Posterior vena cava (tissue), 2 donors: ENCODE measurements at regions of chrX and their contacts with region 1.

Region 1: GRCh38 chrX:130916636-130917422 is 13.8 kb upstream of the ENOX2 start:
- DNase-seq: no peak

Region 2: GRCh38 chrX:130393451-130394074 is 523.3 kb before region 1 on chrX:
- intact Hi-C with region 1: loop called in 1 of 2 experiments (anchors 10 kb)
- DNase-seq: peak; percentile 77

Region 3: DNA sequence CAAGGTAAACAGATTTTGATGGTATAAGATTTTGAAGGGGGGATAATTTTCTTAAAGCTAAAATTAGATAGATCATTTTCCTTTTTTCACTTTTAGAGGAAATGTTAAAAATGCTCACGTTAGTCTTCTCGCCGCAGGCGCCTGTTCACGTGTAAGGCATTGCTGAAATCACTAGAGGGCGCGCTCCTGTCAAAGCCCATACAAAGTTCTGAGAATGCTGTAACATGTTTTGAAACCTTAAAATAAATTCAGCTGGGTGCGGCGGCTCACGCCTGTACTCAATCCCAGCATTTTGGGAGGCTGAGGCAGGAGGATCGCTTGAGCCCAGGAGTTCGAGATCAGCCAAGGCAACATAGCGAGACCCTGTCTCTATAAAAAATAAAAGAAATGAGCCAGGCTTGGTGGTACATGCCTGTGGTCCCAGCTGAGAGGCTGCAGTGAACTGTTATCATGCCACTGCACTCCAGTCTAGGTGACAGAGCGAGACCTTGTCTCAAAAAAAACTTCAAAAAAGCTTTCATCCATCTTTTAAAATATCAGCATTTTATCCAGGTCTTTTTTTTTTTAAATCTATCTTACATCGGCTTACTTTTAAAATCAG is 377.0 kb before region 1 on chrX:
- intact Hi-C with region 1: loop called in 1 of 2 experiments (anchors 10 kb)
- DNase-seq: peak; percentile 85

Region 4: GRCh38 chrX:131046596-131046995 is 129.8 kb after region 1 on chrX:
- intact Hi-C with region 1: no loop called
- DNase-seq: no peak